A549 (cell line): ENCODE measurements at regions of chr1 and their contacts with region 1.

Region 1: GRCh38 chr1:17236779-17237560 is 11.9 kb upstream of the PADI3 start:
- DNase-seq: peak; percentile 83 to 92
- ATAC-seq: peak; percentile 60 to 75
- H3K4me3 ChIP-seq: no peak overlapping the region
- H3K27ac ChIP-seq: peak overlapping the region; percentile 96 to 100
- H3K4me1 ChIP-seq: peaks cover 68% of the 10 kb centered on the region
- CTCF ChIP-seq: peak; percentile 81
- EP300 ChIP-seq: no peak; a peak in 1 of 5 replicates
- POLR2A ChIP-seq: no peak
- RAD21 ChIP-seq: peak; percentile 97 to 98

Region 2: DNA sequence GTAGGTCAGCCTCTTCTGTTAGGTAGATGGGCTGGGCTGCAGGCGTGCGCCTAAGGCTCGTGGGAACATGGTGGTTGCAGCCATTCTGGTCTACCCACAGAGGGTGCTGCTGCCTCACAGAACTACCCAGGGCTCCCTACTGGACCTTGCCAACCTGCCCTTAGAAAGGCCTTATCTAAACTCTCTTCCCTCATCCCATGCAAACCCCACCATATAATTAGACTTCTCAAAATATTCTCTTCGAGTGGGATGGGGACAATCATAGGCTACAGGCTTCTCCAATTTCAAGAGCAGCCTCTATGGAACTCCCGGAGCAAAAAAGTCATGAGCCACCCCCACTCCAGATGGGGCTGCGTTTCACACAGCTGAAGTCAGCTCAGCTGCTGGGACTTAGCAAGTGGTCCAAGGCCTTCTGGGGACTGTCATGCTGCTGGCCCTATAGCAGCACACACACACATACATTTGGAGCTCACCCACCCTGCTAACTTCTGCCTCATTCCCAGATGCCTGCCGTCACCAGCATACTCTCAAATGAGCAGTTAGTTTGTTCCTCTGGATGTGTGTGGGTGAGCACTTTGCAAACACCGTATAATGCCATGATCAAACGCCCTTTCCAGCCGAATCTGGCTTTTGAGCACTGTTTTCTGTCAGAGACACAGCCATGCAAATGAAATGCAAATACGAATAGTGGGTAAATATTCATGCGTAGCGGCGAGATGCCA is 177.1 kb before region 1 on chr1:
- CTCF ChIA-PET with region 1: interaction called, 25 read pairs
- POLR2A ChIA-PET with region 1: no interaction called
- DNase-seq: peak; percentile 72 to 73
- ATAC-seq: peak; percentile 99
- H3K4me3 ChIP-seq: no peak overlapping the region
- H3K27ac ChIP-seq: peak overlapping the region in 1 of 2 experiments; percentile 14; a peak in 1 of 6 replicates
- H3K4me1 ChIP-seq: no peaks in the 10 kb centered on the region
- CTCF ChIP-seq: peak; percentile 74
- EP300 ChIP-seq: no peak
- POLR2A ChIP-seq: no peak
- RAD21 ChIP-seq: peak; percentile 88 to 91

Region 3: GRCh38 chr1:17108786-17109185 is 128.2 kb before region 1 on chr1:
- CTCF ChIA-PET with region 1: no interaction called
- POLR2A ChIA-PET with region 1: no interaction called
- DNase-seq: no peak
- ATAC-seq: no peak
- H3K4me3 ChIP-seq: no peak overlapping the region
- H3K27ac ChIP-seq: no peak overlapping the region
- H3K4me1 ChIP-seq: no peaks in the 10 kb centered on the region
- CTCF ChIP-seq: no peak
- EP300 ChIP-seq: no peak
- POLR2A ChIP-seq: no peak
- RAD21 ChIP-seq: no peak

Region 4: DNA sequence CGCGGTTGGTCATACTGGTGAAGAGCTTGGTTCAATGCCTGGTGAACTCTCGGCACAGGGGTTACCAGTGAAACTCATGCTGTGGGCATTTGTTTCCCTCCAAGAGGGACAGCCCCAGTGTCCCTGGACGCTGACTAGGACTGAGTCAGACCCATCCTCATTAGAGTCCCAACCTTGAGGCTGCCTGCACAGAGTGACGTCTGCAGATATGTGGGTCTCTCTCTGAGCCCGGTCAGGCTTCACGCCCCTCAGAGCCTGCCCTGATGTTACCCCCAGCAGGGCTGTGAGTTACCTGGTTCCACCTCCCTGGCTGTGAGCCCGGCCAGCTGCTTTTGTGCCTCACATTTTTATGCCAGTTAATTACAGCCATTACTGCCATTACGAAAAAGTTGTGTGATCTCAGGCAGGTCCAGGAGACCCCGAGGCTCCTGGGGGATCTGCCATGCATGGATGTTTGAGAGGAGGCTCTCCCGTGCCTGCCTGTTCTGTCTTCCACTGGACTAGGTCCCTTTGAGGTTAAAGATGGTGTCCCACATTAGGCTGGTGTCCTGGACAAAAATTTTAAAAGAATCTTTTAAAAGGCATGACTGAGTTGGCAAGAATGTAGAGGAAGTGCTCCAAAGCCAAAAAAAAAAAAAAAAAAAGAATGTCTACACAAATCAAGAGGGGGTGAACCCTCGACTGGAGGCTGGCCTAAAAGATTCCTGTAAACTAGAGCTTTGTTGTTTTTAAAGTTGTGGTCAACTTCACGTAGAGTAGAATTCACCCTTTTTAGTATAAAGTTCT is 68.7 kb before region 1 on chr1:
- CTCF ChIA-PET with region 1: interaction called, 17 read pairs
- POLR2A ChIA-PET with region 1: interaction called, 4 read pairs
- DNase-seq: peak; percentile 54 to 80
- ATAC-seq: peak; percentile 82 to 91
- H3K4me3 ChIP-seq: no peak overlapping the region
- H3K27ac ChIP-seq: peak overlapping the region; percentile 78 to 88
- H3K4me1 ChIP-seq: peaks cover 34% of the 10 kb centered on the region
- CTCF ChIP-seq: no peak
- EP300 ChIP-seq: peak in 1 of 2 experiments; percentile 56; a peak in 1 of 5 replicates
- POLR2A ChIP-seq: no peak
- RAD21 ChIP-seq: no peak

Region 5: DNA sequence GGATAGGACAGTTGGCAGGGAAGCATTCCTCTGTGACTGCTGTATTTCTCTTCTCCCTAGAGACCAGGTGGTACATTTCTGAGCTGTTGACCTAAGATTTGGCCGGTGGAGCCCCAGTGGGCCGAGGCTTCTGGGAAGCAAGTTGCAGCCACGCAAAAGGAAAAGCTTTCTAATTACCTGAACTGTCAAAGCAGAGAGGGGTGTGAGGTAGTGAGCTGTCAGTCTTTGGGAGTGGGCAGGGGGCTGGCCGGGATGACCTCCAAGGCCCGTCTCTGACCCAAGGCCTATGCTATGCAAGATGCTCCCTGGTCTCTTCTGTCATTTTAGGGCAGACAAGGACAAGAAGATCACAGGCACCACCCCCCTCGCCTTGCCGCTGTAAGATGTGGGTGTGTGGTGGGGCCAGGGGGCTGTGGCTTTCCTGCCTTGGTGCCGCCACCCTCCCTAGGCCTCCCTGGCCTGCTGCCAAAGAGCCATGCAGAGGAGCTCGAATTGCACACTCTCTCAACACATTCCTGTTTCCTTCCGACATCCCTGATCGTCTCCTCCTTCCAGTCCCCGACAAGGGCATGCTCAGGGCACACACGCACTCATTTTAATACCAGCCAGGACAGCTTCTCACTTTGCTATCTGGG is 24.4 kb before region 1 on chr1:
- CTCF ChIA-PET with region 1: interaction called, 18 read pairs
- POLR2A ChIA-PET with region 1: interaction called, 4 read pairs
- DNase-seq: no peak
- ATAC-seq: no peak
- H3K4me3 ChIP-seq: no peak overlapping the region
- H3K27ac ChIP-seq: peak overlapping the region in 1 of 2 experiments; percentile 81; a peak in 3 of 6 replicates
- H3K4me1 ChIP-seq: peaks cover 52% of the 10 kb centered on the region
- CTCF ChIP-seq: no peak
- EP300 ChIP-seq: no peak
- POLR2A ChIP-seq: no peak
- RAD21 ChIP-seq: no peak

Region 6: GRCh38 chr1:17259233-17259873 is 22.4 kb after region 1 on chr1:
- CTCF ChIA-PET with region 1: interaction called, 104 read pairs
- POLR2A ChIA-PET with region 1: no interaction called
- DNase-seq: no peak
- ATAC-seq: peak in 1 of 2 experiments; percentile 51; a peak in 2 of 6 replicates
- H3K4me3 ChIP-seq: no peak overlapping the region
- H3K27ac ChIP-seq: peak overlapping the region; percentile 49 to 84; a peak in 5 of 6 replicates
- H3K4me1 ChIP-seq: peaks cover 21% of the 10 kb centered on the region
- CTCF ChIP-seq: no peak
- EP300 ChIP-seq: no peak
- POLR2A ChIP-seq: no peak
- RAD21 ChIP-seq: no peak

Region 7: DNA sequence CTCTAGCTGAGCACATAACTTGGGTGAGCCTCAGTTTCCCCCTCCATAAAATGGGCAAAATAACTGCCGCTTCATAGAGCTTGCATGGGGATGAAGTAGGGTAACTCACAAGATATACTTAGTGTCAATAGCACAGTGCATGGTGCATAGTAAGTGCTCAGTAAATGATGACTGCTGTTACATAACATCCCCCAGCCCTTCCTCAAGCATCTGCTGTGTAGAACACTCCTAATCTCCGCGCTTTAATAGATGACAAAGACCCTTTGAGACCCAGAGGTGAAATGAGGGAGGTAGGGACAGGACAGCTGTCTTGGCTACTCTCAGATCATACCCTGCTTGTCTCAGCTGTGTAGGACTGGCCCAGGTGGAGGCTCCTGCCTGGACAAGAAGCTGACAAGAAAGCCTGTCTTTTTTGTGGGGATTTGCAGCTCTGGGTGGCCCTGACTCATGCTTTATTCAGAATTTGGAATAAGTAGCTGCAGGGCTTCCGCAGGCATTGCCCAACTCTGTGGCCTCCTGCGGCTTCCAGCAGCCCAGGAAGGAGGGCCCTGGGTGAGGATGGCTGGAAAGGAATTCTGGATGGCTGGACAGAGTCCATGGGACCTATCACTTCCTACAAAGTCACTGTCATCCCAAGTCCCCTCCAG is 50.3 kb after region 1 on chr1:
- CTCF ChIA-PET with region 1: interaction called, 19 read pairs
- POLR2A ChIA-PET with region 1: no interaction called
- DNase-seq: peak; percentile 63 to 75
- ATAC-seq: peak; percentile 89 to 96
- H3K4me3 ChIP-seq: no peak overlapping the region
- H3K27ac ChIP-seq: peak overlapping the region; percentile 77 to 89
- H3K4me1 ChIP-seq: peaks cover 48% of the 10 kb centered on the region
- CTCF ChIP-seq: no peak
- EP300 ChIP-seq: peak; percentile 84 to 87; a peak in 4 of 5 replicates
- POLR2A ChIP-seq: no peak
- RAD21 ChIP-seq: peak; percentile 21 to 45; a peak in 3 of 5 replicates

Region 8: GRCh38 chr1:17405898-17406759 is 169.2 kb after region 1 on chr1:
- CTCF ChIA-PET with region 1: interaction called, 27 read pairs
- POLR2A ChIA-PET with region 1: no interaction called
- DNase-seq: peak; percentile 62 to 70
- ATAC-seq: peak; percentile 83 to 91
- H3K4me3 ChIP-seq: no peak overlapping the region
- H3K27ac ChIP-seq: peak overlapping the region in 1 of 2 experiments; percentile 69; a peak in 2 of 6 replicates
- H3K4me1 ChIP-seq: no peaks in the 10 kb centered on the region
- CTCF ChIP-seq: peak; percentile 63
- EP300 ChIP-seq: no peak
- POLR2A ChIP-seq: no peak
- RAD21 ChIP-seq: peak; percentile 74